GM12878 (cell line): ENCODE measurements at regions of chr2 and their contacts with region 1.

Region 1: GRCh38 chr2:173402405-173402974 is 47.8 kb downstream of the CDCA7 start:
- DNase-seq: peak; percentile 15
- ATAC-seq: peak; percentile 99
- H3K4me3 ChIP-seq: no peak overlapping the region
- H3K27ac ChIP-seq: no peak overlapping the region
- H3K4me1 ChIP-seq: no peaks in the 10 kb centered on the region
- H3K27me3 ChIP-seq: peaks cover 1 to 6% of the 10 kb centered on the region in 2 experiments; a peak in 3 of 4 replicates
- CTCF ChIP-seq: peak; percentile 81 to 94 (median 88)
- EP300 ChIP-seq: no peak
- POLR2A ChIP-seq: no peak
- RAD21 ChIP-seq: peak; percentile 93

Region 2: DNA sequence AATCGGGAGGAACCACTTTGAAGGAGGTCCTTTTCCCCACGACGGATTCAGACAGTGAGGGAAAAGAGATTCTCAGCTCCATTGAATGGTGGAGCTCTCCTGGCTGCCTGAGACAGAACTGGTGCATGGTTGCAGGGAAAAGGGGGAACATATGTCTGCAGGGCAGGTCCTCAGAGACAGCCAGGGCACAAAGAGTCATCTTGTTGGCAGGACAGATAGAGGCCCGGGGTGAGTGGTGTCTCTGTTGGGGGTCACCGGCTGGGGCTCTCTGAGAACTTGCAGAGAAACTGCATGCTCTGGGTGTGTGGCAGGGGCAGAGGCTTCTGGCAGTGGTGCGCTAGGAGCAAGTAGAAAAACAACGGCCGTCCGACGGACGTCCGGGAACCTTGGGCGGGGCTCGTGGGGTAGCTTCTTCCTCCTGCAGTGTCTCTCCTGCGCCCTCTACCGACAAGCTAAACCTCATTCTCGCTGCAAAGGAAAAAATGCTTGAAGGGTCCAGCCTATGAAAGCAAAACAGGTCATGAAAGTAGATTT is 46.5 kb after region 1 on chr2:
- CTCF ChIA-PET with region 1: interaction called, 30 read pairs
- POLR2A ChIA-PET with region 1: no interaction called
- RAD21 ChIA-PET with region 1: interaction called, 7 read pairs
- SMC1A ChIA-PET with region 1: interaction called, 14 read pairs
- in situ Hi-C with region 1: no loop called
- intact Hi-C with region 1: loop called (anchors 1 kb)
- DNase-seq: peak; percentile 34
- ATAC-seq: peak; percentile 94
- H3K4me3 ChIP-seq: no peak overlapping the region
- H3K27ac ChIP-seq: no peak overlapping the region
- H3K4me1 ChIP-seq: no peaks in the 10 kb centered on the region
- H3K27me3 ChIP-seq: no peaks in the 10 kb centered on the region; a peak in 1 of 4 replicates
- CTCF ChIP-seq: peak; percentile 48 to 74 (median 56)
- EP300 ChIP-seq: no peak
- POLR2A ChIP-seq: no peak
- RAD21 ChIP-seq: peak; percentile 63

Region 3: DNA sequence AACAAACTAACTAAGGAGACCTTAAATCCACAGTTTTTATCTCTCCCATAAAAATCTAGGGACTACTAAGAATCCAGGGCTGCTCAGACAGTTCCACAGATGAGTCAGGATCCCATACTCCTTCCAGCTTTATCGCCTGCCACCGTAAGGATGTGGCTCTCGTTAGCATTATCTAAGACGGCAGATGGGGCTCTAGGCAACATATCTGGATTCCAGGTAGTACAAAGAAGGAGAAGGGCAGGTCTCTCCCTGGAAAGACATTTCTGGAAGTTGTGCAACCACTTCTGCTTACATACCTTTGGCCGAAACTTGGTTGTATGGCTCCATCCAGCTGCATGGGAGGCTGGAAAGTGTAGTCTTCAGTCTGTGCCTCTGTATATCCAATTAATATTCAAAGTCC is 413.3 kb after region 1 on chr2:
- CTCF ChIA-PET with region 1: no interaction called
- POLR2A ChIA-PET with region 1: no interaction called
- RAD21 ChIA-PET with region 1: no interaction called
- SMC1A ChIA-PET with region 1: no interaction called
- in situ Hi-C with region 1: no loop called
- intact Hi-C with region 1: no loop called
- DNase-seq: no peak
- ATAC-seq: no peak
- H3K4me3 ChIP-seq: no peak overlapping the region
- H3K27ac ChIP-seq: no peak overlapping the region
- H3K4me1 ChIP-seq: no peaks in the 10 kb centered on the region
- H3K27me3 ChIP-seq: no peaks in the 10 kb centered on the region
- CTCF ChIP-seq: no peak
- EP300 ChIP-seq: no peak
- POLR2A ChIP-seq: no peak
- RAD21 ChIP-seq: no peak

Region 4: DNA sequence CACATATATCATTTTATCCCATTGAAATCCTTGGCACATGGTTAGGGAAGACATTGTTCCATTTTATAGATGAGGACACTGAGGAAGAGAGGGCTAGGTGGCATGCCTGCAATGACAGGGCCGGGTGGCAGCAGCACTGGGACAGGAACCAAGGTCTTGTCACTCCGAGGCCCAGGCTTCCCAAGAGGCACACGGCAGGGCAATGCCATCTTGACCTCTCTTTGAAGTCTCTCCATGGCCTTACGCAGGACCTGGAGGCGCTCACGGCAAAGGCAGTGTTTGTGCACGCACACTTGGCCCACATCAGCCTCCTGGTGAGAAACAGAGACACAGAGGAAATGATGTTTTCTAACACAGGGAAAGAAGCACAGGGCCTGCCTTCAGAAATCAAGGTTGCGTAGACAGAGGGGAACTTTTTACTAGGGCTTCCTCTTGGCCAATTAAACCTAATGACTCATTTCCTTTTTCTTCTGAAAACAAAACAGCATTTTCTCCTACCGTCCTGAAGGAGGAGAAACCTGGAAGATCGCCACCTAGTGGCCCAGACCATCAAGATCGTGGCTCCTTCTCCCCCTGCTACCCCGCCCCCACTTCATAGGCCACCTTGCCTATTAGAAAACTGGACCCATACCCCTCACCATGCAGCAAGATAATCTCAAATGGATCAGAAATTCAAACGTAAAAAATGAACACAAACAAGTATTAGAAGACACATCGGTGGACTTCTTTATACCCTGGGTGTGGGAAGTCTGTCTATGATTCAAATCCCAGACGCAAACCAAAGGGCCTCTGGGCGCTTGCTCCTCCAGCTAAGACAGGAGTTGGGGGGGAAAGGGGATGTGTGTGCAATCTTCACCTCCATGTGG is 637.3 kb after region 1 on chr2:
- CTCF ChIA-PET with region 1: interaction called, 3 read pairs
- POLR2A ChIA-PET with region 1: no interaction called
- RAD21 ChIA-PET with region 1: interaction called, 3 read pairs
- SMC1A ChIA-PET with region 1: interaction called, 3 read pairs
- in situ Hi-C with region 1: loop called (anchors 10 kb)
- intact Hi-C with region 1: loop called (anchors 5 kb)
- DNase-seq: peak; percentile 84
- ATAC-seq: peak; percentile 93
- H3K4me3 ChIP-seq: no peak overlapping the region
- H3K27ac ChIP-seq: peak overlapping the region; percentile 62
- H3K4me1 ChIP-seq: peaks cover 42% of the 10 kb centered on the region
- H3K27me3 ChIP-seq: no peaks in the 10 kb centered on the region
- CTCF ChIP-seq: peak; percentile 82 to 88 (median 85)
- EP300 ChIP-seq: peak in 1 of 2 experiments; percentile 48; a peak in 1 of 4 replicates
- POLR2A ChIP-seq: no peak
- RAD21 ChIP-seq: peak; percentile 79

Region 5: GRCh38 chr2:174442546-174443510 is 1040.3 kb after region 1 on chr2:
- CTCF ChIA-PET with region 1: no interaction called
- POLR2A ChIA-PET with region 1: no interaction called
- RAD21 ChIA-PET with region 1: no interaction called
- SMC1A ChIA-PET with region 1: no interaction called
- in situ Hi-C with region 1: no loop called
- intact Hi-C with region 1: loop called (anchors 10 kb)
- DNase-seq: no peak
- ATAC-seq: no peak
- H3K4me3 ChIP-seq: no peak overlapping the region
- H3K27ac ChIP-seq: no peak overlapping the region
- H3K4me1 ChIP-seq: no peaks in the 10 kb centered on the region
- H3K27me3 ChIP-seq: no peaks in the 10 kb centered on the region
- CTCF ChIP-seq: no peak
- EP300 ChIP-seq: no peak
- POLR2A ChIP-seq: no peak
- RAD21 ChIP-seq: no peak